Heart right ventricle (tissue), 16 donors: ENCODE measurements at regions of chr9 and their contacts with region 1.

Region 1: DNA sequence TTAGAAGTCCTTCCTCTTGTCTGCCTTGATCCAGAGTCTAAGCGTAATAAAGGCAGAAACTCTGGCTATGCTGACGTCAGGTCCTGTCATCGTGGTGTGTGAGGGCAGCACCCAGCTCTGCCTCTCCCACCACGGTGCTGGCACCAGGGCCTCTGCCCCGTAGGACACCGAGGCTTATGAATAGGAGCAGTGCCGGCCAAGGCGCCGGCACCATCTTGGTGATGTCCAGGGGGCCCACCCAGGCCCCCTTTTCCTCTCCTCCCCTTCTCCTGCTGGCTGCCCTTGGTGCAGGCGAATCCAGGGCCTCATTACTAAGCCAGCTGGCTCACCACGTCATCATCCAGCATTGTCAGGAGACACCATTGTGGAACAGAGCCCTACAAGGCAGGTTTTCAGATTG is 252.3 kb downstream of the FANCC start:
- DNase-seq: no peak
- ATAC-seq: peak in 7 of 8 donors; percentile 16 to 80 (median 42)
- H3K4me3 ChIP-seq: no peak overlapping the region
- H3K27ac ChIP-seq: peak overlapping the region; percentile 6 to 72 (median 54)
- H3K4me1 ChIP-seq: peaks cover 46 to 100% (median 100%) of the 10 kb centered on the region in 9 donors
- H3K27me3 ChIP-seq: no peaks in the 10 kb centered on the region
- CTCF ChIP-seq: no peak

Region 2: DNA sequence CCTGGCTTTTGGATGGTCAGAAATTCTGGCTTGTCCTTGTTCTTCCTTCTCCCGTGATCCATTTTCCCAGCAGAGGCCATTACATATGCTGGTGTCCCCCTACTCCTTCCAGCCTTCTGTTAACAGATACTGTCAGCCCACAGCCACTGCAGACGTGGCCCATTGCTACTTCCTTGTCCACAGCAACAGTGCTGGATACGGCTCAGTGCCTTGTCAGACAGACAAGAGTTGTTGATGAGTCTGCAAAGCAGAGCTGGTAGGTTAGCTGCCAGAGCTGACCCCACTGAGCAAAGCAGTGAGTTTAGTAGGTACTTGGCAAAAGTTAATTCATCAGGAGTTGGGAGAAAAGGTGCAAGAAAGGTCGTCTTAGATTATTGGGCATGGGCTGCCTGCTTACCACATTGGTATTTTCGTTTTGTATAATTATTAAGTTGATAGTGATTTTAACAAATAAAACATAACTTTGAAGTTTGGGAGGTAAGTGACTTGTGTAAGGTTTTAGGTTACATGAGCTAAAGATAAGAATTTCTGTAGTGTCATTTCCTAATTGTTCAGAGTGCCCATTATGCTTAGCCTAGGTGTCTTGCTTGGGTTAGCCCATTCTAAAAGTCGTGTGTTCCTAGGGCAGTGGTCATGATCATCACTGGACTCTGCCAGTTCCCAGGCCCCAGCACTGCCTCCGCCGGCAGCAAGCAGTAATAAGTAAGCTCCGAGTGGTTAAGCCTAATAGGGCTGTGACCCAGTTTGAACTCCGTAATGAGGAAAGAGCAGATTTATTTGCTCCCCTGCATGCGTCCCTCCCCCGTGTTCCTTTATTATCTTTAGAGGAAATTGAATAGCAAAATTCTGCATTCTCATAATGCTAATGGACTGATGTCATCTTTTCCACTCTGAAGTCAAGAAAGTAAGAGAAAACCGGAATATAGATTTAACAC is 39.7 kb before region 1 on chr9:
- intact Hi-C with region 1: loop called in 1 of 10 experiments (anchors 5 kb)
- DNase-seq: peak; percentile 50 to 82
- ATAC-seq: peak; percentile 81 to 91 (median 86)
- H3K4me3 ChIP-seq: peak overlapping the region in 5 of 10 donors; percentile 6 to 20 (median 13)
- H3K27ac ChIP-seq: peak overlapping the region in 9 of 10 donors; percentile 2 to 87 (median 81)
- H3K4me1 ChIP-seq: peaks cover 21 to 100% (median 99%) of the 10 kb centered on the region in 9 donors
- H3K27me3 ChIP-seq: no peaks in the 10 kb centered on the region
- CTCF ChIP-seq: peak in 8 of 9 donors; percentile 26 to 61 (median 34)

Region 3: DNA sequence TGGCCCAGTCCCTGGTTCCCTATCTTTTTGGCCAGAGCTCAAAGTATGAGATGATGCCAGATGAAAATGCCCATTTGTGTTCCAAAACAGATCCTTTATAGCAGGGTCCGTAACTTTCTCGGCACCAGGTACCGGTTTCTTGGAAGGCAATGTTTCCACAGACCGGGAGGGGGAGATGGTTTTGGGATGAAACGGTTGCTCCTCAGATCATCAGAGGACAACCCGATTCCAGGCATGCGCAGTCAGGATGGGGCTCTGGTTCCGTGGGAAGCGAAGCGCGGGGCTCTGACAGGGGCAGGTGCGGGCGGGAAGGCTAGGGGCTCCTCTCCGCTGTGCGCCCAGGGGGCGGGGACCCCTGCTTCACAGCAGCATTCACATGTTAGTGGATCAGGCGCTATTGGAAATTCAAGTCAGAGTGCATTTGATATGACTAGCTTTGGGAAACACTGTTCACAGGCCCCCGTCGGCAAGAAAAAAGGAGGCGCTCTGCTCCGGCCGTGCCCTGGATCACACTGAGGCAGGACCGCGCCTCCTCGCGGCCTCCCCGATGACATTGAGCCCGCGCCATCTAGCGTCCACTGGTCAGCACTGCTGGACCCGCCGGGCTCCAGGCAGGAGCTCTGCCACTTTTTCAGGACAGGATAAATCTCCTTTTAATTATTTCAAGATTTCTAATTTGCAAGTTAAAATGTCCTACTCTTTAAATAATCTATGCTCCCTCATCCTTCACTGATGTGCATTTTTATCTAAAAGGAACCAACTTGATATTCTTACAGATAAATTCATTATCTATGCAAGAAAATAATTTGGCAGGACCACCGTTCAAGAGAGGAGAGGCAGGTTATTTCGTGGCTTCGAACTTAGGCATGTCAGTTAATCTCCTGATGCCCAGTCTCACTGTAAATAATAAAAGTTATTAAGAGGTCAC is 62.3 kb after region 1 on chr9:
- intact Hi-C with region 1: no loop called
- DNase-seq: peak; percentile 86 to 87
- ATAC-seq: peak; percentile 83 to 94 (median 90)
- H3K4me3 ChIP-seq: peak overlapping the region in 9 of 10 donors; percentile 21 to 53 (median 43)
- H3K27ac ChIP-seq: peak overlapping the region in 1 of 10 donors; percentile 36
- H3K4me1 ChIP-seq: peaks cover 0 to 11% (median 6%) of the 10 kb centered on the region in 9 donors
- H3K27me3 ChIP-seq: no peaks in the 10 kb centered on the region
- CTCF ChIP-seq: peak; percentile 92 to 100 (median 98)